ENCODE measurements at regions of chr19 and their contacts with region 1.

Region 1: GRCh38 chr19:4909897-4910593 is 744 bp downstream of the UHRF1 start:
- DNase-seq: peak; percentile 86
- H3K4me3 ChIP-seq: peak overlapping the region; percentile 19 to 69
- H3K27ac ChIP-seq: no peak overlapping the region
- H3K4me1 ChIP-seq: peaks cover 4 to 23% of the 10 kb centered on the region in 2 donors
- H3K27me3 ChIP-seq: peaks cover 0 to 4% of the 10 kb centered on the region in 2 donors
- CTCF ChIP-seq: no peak
- POLR2A ChIP-seq: no peak

Region 2: DNA sequence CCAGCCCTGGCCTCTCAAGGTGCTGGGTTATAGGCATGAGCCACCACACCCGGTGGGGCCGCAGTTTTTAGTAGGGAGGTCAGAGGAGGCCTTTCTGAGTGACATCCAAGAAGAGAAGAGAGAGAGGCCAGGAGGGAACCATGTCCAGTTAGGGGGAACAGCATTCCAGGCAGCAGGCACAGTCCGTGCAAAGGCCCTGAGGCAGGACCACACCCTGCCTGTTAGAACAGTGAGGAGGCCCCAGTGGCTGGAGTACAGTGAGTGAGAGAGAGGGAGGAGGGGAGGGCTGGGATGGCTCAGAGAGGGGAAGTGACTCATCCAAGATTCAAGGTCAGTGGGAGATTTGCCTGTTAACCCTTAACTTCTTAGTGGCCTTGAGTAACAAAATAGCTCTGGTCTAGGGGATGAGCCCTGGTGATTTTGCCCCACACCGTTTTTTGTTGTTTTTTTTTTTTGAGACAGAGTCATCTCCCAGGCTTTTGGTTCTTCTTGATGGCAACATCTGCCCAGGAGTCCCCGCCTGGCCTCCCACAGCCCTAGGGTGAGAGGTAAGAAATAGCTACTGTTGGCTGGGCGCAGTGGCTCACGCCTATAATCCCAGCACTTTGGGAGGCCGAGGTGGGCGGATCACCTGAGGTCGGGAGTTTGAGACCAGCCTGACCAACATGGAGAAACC is 39.9 kb before region 1 on chr19:
- intact Hi-C with region 1: loop called (anchors 2 kb)
- DNase-seq: peak in 1 of 2 donors; percentile 24
- H3K4me3 ChIP-seq: no peak overlapping the region
- H3K27ac ChIP-seq: no peak overlapping the region
- H3K4me1 ChIP-seq: no peaks in the 10 kb centered on the region
- H3K27me3 ChIP-seq: no peaks in the 10 kb centered on the region
- CTCF ChIP-seq: no peak
- POLR2A ChIP-seq: no peak

Measured in uterus (tissue), 4 donors.